ENCODE measurements at regions of chr5 and their contacts with region 1.

Region 1: DNA sequence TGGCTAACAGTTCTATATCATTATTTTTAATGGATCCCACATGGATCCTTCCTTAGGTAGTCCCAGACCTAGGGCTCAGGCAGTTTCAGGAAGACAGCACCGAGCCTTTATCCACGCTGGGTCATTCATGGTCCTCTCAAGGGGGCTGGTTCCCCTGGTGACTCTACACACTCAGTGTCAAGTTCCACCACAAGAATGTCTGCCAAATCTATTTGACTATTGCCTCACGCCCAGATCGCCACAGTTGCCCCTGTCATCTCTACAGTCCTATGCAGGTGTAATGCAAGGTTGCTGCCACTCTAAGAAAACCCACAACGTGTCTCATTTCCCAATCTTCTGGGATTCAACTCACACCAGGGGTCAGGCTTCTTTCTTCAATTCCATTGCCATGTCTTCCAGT is 8.0 kb upstream of the ZNF366 start:
- DNase-seq: peak; percentile 20 to 44
- ATAC-seq: peak; percentile 28 to 81 (median 72)
- H3K4me3 ChIP-seq: no peak overlapping the region
- H3K27ac ChIP-seq: peak overlapping the region; percentile 32
- H3K4me1 ChIP-seq: peaks cover 39% of the 10 kb centered on the region
- H3K27me3 ChIP-seq: no peaks in the 10 kb centered on the region
- CTCF ChIP-seq: no peak

Region 2: DNA sequence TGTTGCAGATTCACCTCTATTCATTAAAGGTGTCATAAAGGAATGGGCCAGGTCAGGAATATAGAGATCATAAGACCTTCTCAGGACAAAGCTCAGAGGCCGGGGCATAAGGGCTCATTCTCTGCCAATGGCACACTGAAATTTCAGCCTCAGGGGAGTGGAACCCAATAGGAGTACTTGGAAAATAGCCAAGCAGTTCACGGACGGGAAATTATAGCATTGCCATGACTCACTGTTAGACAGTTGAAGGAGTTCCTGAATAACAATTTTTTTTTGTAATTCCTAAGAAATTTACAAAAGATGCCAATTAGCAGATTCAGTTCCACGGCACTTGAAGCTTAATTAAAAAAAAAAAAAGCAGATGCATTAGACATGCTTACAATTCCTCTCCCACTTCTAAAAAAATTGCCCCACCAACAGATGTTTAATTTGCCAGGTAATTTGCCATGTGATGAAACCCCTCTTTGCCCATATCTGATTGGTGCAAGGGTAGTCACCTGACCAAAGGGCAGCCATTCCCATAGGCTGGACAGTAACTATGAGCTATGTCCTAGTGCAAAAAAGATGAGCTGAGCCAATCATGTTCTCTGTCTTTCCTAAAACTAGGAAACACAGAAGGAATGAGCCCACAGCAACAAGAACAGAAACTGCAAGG is 136.4 kb before region 1 on chr5:
- intact Hi-C with region 1: loop called in 1 of 2 experiments (anchors 2 kb)
- DNase-seq: peak; percentile 34 to 62
- ATAC-seq: peak; percentile 76 to 83 (median 78)
- H3K4me3 ChIP-seq: no peak overlapping the region
- H3K27ac ChIP-seq: peak overlapping the region; percentile 83
- H3K4me1 ChIP-seq: peaks cover 44% of the 10 kb centered on the region
- H3K27me3 ChIP-seq: no peaks in the 10 kb centered on the region
- CTCF ChIP-seq: no peak

Region 3: DNA sequence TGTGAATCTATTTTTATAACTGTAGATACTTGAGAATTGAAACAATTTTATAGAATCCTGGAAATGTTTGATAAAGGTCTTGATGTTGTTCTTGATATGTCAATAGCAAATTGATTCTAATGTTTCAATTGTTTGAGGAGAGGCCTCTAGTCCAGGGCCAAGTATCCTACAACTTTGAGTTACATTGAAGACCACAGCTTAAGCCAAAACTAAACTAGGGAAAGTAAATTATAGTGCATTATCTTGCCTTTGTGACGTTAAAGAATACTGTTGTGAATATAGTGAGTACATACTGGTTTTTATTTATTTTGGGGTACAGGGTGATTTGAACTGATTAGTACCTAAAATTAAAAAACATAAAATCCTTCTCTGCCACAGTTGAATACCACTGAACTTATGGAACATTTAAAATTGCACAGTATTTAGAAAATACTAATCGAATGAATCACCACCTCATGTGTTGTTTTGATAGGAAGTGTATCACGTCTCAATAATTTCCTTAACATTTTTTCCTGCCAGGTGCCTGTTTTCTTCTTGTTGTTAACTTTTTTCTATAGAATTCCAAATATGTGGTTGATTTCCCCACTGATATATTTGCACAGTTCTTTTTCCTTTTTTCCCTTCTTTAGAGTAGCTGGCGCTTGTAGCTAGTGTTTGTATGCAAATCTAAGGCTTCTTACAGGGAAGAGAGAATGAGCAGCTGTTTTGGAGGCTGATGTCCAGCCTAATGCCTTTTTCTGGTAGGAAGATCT is 1123.3 kb after region 1 on chr5:
- intact Hi-C with region 1: no loop called
- DNase-seq: no peak
- ATAC-seq: no peak
- H3K4me3 ChIP-seq: no peak overlapping the region
- H3K27ac ChIP-seq: no peak overlapping the region
- H3K4me1 ChIP-seq: no peaks in the 10 kb centered on the region
- H3K27me3 ChIP-seq: no peaks in the 10 kb centered on the region
- CTCF ChIP-seq: no peak